ACHN (cell line): ENCODE measurements at regions of chr6 and their contacts with region 1.

Region 1: GRCh38 chr6:47097092-47097945 is 55.2 kb upstream of the ADGRF1 start:
- DNase-seq: peak; percentile 75

Region 2: DNA sequence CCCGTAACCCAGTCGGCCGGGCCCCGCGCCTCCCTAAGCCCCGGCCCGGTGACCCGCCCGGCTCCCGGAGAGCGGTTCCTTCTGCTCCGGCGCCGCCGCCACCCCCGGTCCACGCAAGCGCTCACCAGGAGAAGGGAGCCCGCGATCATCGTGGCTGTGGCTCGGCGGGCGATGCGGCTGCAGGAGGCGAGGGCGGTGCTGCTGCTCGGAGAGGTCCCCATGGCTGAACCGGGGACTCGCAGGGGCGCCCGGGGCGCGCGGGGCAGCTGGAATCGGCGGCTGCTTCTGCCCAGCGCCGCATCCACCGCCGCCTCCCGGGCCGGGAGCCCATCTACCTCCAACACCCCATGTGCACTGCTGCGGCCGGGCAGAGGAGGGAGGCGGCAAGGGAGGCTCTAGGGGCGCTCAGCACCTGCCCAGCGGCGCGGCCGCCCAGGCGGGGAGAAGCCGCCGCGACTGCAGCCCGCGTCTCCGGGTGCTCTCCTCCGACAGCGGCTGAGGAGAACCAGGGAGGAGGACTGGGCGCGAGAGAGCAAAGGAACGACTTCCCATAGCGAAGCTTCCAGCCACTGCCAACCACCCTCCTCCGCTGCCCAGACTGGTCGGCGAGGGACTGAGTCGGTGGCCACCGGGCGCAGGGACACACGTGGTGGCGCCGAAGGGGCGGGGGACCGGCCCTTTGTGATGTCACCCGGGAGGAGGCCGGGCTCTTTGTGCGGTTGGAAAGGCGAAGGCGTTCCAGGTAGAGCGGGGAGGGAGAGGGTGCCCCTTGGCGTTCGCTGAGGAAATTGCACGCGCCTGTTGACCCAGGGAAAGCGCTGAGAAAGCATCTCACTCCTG is 212.2 kb after region 1 on chr6 and contains the start of gene TNFRSF21:
- in situ Hi-C with region 1: loop called (anchors 25 kb)
- DNase-seq: peak; percentile 86